HEK293 (cell line): ENCODE measurements at regions of chr2 and their contacts with region 1.

Region 1: DNA sequence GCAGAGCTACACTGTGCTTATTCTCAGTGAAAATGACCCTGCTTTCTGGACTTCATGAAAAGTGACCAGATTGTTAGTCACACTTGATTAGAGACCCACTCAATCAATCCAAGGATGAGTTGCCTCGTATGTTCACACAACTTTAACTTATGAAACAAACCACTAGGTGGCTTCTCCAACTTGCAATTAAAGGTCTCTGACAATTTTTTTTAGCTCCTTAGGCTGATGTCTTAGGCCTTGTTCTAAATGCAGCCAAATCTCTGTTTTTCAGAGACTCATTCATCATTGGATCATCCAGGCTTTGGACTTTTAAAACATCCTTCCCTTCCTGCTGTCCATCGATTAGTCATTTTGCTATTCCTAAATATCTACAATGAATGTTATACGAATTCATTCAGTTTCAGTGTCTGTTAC is 63.4 kb downstream of the MREG start:
- H3K4me3 ChIP-seq: no peak overlapping the region
- H3K27ac ChIP-seq: no peak overlapping the region
- H3K4me1 ChIP-seq: no peaks in the 10 kb centered on the region
- CTCF ChIP-seq: 0 out of 2 replicates have a peak, but pooled peaks have one; percentile 19

Region 2: DNA sequence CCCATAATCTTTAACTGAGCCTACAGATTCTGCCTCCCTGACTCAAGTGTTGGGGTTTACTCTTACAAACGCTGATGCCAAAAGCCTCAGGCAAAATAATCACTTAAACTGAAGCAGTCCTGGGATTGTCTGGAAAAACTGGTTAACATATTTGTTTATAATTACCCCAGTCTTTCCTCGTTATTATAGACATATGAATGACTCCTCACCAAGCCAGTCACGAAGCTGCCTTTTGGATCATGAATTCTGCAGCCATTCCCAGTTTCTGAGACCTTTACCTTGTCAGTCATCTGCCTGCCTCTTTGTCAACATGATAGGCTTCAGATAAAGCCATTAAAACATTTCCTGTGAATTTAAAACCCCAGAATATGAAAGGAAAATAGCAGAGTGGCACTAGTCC is 17.0 kb after region 1 on chr2:
- CTCF ChIA-PET with region 1: interaction called, 10 read pairs
- POLR2A ChIA-PET with region 1: no interaction called
- H3K4me3 ChIP-seq: no peak overlapping the region
- H3K27ac ChIP-seq: no peak overlapping the region
- H3K4me1 ChIP-seq: peaks cover 4% of the 10 kb centered on the region
- CTCF ChIP-seq: no peak

Region 3: GRCh38 chr2:216023055-216023648 is 73.2 kb after region 1 on chr2:
- CTCF ChIA-PET with region 1: interaction called, 33 read pairs
- POLR2A ChIA-PET with region 1: no interaction called
- H3K4me3 ChIP-seq: no peak overlapping the region
- H3K27ac ChIP-seq: no peak overlapping the region
- H3K4me1 ChIP-seq: no peaks in the 10 kb centered on the region
- CTCF ChIP-seq: no peak